CD4-positive, alpha-beta T cell (primary cell): ENCODE measurements at regions of chr7 and their contacts with region 1.

Region 1: DNA sequence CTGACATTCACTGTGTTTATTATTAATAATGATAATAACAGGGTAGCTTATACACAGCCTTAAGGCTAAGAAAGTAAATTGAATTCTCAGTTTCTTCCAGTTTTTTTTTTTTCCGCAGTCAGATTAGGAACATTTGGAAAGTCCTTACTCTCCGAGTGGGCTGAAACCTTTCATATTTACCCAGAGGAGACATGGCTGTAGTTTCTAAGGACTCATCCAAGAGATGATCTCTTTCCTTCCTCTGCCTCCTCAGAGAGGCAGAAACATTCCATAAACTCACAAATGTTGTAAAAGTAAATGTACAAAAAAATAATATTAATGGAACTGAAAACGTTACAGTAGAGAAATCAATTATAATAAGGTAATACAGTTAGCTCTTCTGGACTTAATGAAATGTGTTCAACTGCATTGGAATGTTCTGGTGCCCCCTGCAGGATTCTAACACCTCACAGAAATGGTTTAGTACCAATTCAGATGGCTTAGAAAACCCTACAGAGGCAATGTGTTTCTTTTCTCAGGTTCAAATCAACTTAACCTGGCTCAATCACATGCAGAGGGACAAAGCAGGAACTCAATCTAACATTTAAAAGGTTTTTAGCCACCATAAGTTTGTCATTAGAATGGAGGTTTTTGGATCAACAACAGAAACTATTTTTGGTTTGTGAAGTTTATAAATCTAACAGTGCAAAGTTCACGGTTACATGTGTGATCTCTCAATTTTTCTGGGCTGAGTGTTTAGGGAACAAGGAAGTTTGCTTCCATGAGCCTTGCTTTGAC is 71.7 kb downstream of the ICA1 start:
- DNase-seq: peak; percentile 40 to 85 (median 66)
- ATAC-seq: peak; percentile 97
- H3K4me3 ChIP-seq: no peak overlapping the region
- H3K4me3 Mint-ChIP-seq: no peak overlapping the region
- H3K27ac ChIP-seq: no peak overlapping the region
- H3K27ac Mint-ChIP-seq: peak overlapping the region; percentile 24
- H3K4me1 ChIP-seq: peaks cover 8% of the 10 kb centered on the region
- H3K4me1 Mint-ChIP-seq: peaks cover 32% of the 10 kb centered on the region
- H3K27me3 ChIP-seq: no peaks in the 10 kb centered on the region
- H3K27me3 Mint-ChIP-seq: no peaks in the 10 kb centered on the region
- CTCF ChIP-seq: peak; percentile 86

Region 2: GRCh38 chr7:7595451-7595850 is 594.9 kb before region 1 on chr7:
- CTCF ChIA-PET with region 1: interaction called, 3 read pairs
- POLR2A ChIA-PET with region 1: no interaction called
- intact Hi-C with region 1: loop called in 1 of 2 experiments (anchors 1 kb)
- DNase-seq: peak in 3 of 14 experiments; percentile 56
- ATAC-seq: peak; percentile 58
- H3K4me3 ChIP-seq: no peak overlapping the region
- H3K4me3 Mint-ChIP-seq: no peak overlapping the region
- H3K27ac ChIP-seq: no peak overlapping the region
- H3K27ac Mint-ChIP-seq: no peak overlapping the region
- H3K4me1 ChIP-seq: no peaks in the 10 kb centered on the region
- H3K4me1 Mint-ChIP-seq: no peaks in the 10 kb centered on the region
- H3K27me3 ChIP-seq: no peaks in the 10 kb centered on the region
- H3K27me3 Mint-ChIP-seq: no peaks in the 10 kb centered on the region
- CTCF ChIP-seq: peak; percentile 54

Region 3: GRCh38 chr7:7795203-7796135 is 394.8 kb before region 1 on chr7:
- CTCF ChIA-PET with region 1: no interaction called
- POLR2A ChIA-PET with region 1: no interaction called
- intact Hi-C with region 1: no loop called
- DNase-seq: no peak
- ATAC-seq: no peak
- H3K4me3 ChIP-seq: no peak overlapping the region
- H3K4me3 Mint-ChIP-seq: no peak overlapping the region
- H3K27ac ChIP-seq: no peak overlapping the region
- H3K27ac Mint-ChIP-seq: no peak overlapping the region
- H3K4me1 ChIP-seq: no peaks in the 10 kb centered on the region
- H3K4me1 Mint-ChIP-seq: peaks cover 7% of the 10 kb centered on the region
- H3K27me3 ChIP-seq: no peaks in the 10 kb centered on the region
- H3K27me3 Mint-ChIP-seq: no peaks in the 10 kb centered on the region
- CTCF ChIP-seq: no peak

Region 4: GRCh38 chr7:8042796-8043535 is 147.3 kb before region 1 on chr7:
- CTCF ChIA-PET with region 1: interaction called, 3 read pairs
- POLR2A ChIA-PET with region 1: no interaction called
- intact Hi-C with region 1: loop called in 1 of 2 experiments (anchors 10 kb)
- DNase-seq: no peak
- ATAC-seq: no peak
- H3K4me3 ChIP-seq: no peak overlapping the region
- H3K4me3 Mint-ChIP-seq: no peak overlapping the region
- H3K27ac ChIP-seq: no peak overlapping the region
- H3K27ac Mint-ChIP-seq: peak overlapping the region; percentile 29
- H3K4me1 ChIP-seq: peaks cover 12% of the 10 kb centered on the region
- H3K4me1 Mint-ChIP-seq: peaks cover 86% of the 10 kb centered on the region
- H3K27me3 ChIP-seq: no peaks in the 10 kb centered on the region
- H3K27me3 Mint-ChIP-seq: no peaks in the 10 kb centered on the region
- CTCF ChIP-seq: no peak

Region 5: DNA sequence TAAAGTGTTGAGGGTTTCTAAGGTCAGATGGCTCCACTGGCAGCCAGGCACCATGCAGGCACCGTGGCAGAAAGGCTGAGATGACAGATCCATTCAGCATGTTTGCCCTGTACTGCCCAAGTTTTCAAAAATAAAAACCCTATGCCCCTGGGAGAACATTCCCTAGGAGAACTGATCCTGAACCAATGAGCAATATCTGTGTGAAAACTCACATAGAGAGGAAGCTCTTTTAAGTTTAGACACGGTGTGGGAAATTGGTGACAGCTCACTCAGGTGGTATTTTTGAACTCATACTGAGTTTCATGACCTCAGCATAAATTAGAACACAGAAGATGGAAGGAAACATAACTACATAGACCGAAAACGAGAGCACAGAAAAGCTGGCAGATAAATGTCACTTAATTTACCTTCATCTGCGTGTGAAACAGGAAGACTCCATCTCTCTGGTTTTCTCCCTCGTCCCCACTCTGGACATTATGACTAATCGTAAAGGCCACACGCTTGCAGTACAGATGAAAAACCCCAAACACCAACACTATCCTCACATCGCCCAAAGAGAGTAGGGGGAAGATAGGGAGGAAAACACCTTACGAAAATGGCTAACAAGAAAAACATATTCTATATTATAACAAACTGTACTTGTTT is 56.1 kb before region 1 on chr7:
- CTCF ChIA-PET with region 1: interaction called, 11 read pairs
- POLR2A ChIA-PET with region 1: interaction called, 4 read pairs
- intact Hi-C with region 1: no loop called
- DNase-seq: peak in 4 of 14 experiments; percentile 34 to 73 (median 64)
- ATAC-seq: peak; percentile 33
- H3K4me3 ChIP-seq: no peak overlapping the region
- H3K4me3 Mint-ChIP-seq: peak overlapping the region; percentile 25
- H3K27ac ChIP-seq: peak overlapping the region; percentile 36 to 79
- H3K27ac Mint-ChIP-seq: peak overlapping the region; percentile 96
- H3K4me1 ChIP-seq: peaks cover 56% of the 10 kb centered on the region
- H3K4me1 Mint-ChIP-seq: peaks cover 79% of the 10 kb centered on the region
- H3K27me3 ChIP-seq: no peaks in the 10 kb centered on the region
- H3K27me3 Mint-ChIP-seq: no peaks in the 10 kb centered on the region
- CTCF ChIP-seq: no peak

Region 6: DNA sequence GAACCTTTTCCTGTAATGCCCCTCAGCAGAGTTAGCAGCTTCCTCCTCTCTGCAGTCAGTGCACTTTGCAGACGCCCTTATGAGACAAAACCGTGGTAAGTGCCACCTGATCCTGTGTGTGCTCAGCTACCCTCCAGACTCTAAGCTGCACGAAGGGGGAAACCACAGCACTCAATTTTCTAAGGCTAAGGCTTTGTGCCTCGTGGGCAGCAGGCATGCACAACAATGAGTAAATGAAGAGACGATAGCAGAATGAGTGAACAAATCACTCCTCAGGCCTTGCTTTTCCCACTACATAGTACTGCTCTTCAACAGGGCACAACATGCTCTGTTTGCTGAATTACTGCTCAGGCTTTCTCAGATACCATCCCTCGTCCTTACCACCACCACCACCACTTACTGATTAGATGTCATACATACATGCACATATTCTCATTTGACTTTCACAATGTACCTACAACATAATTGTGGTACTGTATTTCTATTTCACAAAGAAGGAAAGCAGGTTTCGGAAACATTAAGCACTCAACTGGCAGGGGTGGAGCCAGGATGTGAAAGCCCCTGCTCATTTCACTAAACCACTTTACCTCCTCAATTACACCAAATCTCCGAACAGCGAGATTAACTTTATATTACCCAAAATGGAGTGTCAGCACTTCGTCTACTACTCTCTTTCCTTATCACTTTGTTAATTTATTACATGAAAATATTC is 13.8 kb before region 1 on chr7:
- CTCF ChIA-PET with region 1: interaction called, 10 read pairs
- POLR2A ChIA-PET with region 1: interaction called, 9 read pairs
- intact Hi-C with region 1: no loop called
- DNase-seq: peak; percentile 47 to 87 (median 64)
- ATAC-seq: peak; percentile 93
- H3K4me3 ChIP-seq: peak overlapping the region; percentile 22
- H3K4me3 Mint-ChIP-seq: peak overlapping the region; percentile 72
- H3K27ac ChIP-seq: peak overlapping the region; percentile 82 to 88
- H3K27ac Mint-ChIP-seq: peak overlapping the region; percentile 96
- H3K4me1 ChIP-seq: peaks cover 42% of the 10 kb centered on the region
- H3K4me1 Mint-ChIP-seq: peaks cover 60% of the 10 kb centered on the region
- H3K27me3 ChIP-seq: no peaks in the 10 kb centered on the region
- H3K27me3 Mint-ChIP-seq: no peaks in the 10 kb centered on the region
- CTCF ChIP-seq: no peak